AG04450 (cell line): ENCODE measurements at regions of chr16 and their contacts with region 1.

Region 1: GRCh38 chr16:31868691-31869167 is 4.9 kb upstream of the ZNF267 start:
- DNase-seq: peak; percentile 26
- H3K4me3 ChIP-seq: no peak overlapping the region
- H3K27ac ChIP-seq: no peak overlapping the region
- H3K27me3 ChIP-seq: peaks cover 2% of the 10 kb centered on the region
- CTCF ChIP-seq: peak; percentile 77

Region 2: DNA sequence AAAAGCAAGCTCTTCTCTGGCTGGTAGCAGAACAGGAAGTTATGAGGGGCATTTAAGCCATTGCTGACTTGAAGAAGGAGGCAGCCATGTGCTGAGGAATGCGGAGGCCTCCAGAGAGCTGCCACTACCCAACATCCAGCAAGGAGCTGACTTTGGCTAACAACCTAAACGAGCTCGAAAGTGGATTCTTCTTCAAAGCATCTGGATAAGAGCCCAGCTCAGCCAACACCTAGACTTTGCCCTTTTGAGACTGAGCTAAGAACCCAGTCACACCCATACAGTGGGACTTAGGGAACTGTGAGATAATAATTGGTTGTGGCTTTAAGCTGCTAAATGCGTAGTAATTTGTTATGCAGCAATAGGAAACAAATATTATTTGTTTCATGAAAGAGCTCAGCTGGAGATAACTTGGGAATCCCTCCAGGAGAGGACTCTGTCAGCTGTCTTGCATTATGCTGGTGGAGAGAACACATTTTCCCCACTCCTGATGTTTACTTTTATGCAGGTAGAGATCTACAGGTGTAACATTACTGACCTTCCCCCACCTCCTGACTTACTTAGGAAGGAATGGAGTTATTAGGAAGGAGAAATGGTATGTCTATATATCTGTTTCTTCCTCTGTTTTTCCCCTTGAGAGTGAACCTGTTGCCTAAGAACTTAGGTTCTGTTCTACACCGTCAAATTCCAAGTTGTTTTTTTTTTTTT is 1029.1 kb before region 1 on chr16:
- CTCF ChIA-PET with region 1: interaction called, 10 read pairs
- POLR2A ChIA-PET with region 1: no interaction called
- DNase-seq: no peak
- H3K4me3 ChIP-seq: no peak overlapping the region
- H3K27ac ChIP-seq: no peak overlapping the region
- H3K27me3 ChIP-seq: no peaks in the 10 kb centered on the region
- CTCF ChIP-seq: no peak

Region 3: DNA sequence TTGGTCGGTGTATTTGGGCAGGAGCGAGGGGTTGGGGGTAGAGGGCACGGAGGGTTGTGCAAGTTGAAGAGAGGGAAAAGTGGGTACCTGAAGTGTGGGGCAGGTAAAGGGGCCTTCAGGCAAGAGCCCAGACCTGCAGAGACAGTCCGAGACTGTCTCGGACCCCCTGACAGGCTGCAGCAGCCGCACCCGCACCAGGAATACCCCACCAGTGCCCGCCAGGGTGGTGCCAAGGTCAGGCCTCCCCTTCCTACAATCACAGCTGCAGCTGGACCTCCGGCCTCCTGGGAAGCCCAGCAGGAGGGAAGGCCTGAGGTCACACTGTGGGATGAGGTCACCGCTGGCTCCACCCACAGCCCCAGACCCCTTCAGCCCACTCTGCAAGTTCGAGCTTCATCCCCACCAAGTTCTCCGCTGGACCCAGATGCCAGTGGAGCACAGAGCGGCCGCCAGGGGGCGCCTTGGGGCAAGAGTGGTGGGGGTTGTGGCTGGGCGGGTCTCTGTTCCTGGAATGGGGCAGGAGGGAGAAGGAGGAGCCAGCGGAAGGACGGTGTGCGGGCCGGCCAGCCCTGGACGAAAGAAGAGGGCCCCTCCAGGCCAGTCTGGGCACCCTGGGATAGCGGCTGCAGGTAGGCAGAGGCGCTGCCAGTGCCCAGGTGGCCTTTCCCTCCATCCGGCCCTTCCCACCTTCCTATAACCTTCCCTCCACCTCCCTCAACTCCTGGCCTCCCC is 883.9 kb before region 1 on chr16 and contains the start of gene HSD3B7:
- CTCF ChIA-PET with region 1: interaction called, 20 read pairs
- POLR2A ChIA-PET with region 1: no interaction called
- DNase-seq: peak; percentile 44
- H3K4me3 ChIP-seq: peak within 1 kb of the TSS; percentile 53
- H3K27ac ChIP-seq: peak within 1 kb of the TSS; percentile 11
- H3K27me3 ChIP-seq: no peaks in the 10 kb centered on the region
- CTCF ChIP-seq: peak; percentile 90
- polyA plus RNA-seq, gene HSD3B7: 6.1 and 9.5 TPM in 2 replicates

Region 4: GRCh38 chr16:31202414-31203375 is 666.0 kb before region 1 on chr16 and contains the start of gene PYCARD:
- CTCF ChIA-PET with region 1: interaction called, 11 read pairs
- POLR2A ChIA-PET with region 1: interaction called, 4 read pairs
- DNase-seq: no peak
- H3K4me3 ChIP-seq: peak within 1 kb of the TSS; percentile 80
- H3K27ac ChIP-seq: no peak within 1 kb of the TSS
- H3K27me3 ChIP-seq: peaks cover 16% of the 10 kb centered on the region
- CTCF ChIP-seq: no peak
- polyA plus RNA-seq, gene PYCARD: 21.8 and 31.0 TPM in 2 replicates

Region 5: DNA sequence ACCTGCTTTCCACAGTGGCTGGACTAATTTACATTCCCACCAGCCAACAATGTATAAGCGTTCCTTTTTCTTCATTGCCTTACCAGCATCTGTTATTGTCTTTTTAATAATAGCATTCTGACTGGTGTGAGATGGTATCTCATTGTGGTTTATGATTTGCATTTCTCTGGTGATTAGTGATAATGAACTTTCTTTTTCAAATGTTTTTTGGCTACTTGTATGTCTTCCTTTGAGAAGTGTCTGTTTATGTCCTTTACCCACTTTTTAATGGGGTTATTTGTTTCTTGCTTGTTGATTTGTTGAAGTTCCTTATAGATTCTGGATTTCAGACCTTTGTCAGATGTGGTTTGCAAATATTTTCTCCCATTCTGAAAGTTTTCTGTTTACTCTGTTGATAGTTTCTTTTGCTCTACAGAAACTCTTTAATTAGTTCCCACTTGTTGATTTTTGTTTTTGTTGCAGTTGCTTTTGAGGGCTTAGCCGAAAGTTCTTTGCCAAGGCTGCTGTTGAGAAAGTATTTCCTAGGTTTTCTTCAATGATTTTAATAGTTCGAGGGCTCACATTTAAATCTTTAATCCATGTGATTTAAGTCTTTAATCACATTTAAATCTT is 582.2 kb before region 1 on chr16:
- CTCF ChIA-PET with region 1: no interaction called
- POLR2A ChIA-PET with region 1: no interaction called
- DNase-seq: no peak
- H3K4me3 ChIP-seq: no peak overlapping the region
- H3K27ac ChIP-seq: no peak overlapping the region
- H3K27me3 ChIP-seq: no peaks in the 10 kb centered on the region
- CTCF ChIP-seq: no peak

Region 6: DNA sequence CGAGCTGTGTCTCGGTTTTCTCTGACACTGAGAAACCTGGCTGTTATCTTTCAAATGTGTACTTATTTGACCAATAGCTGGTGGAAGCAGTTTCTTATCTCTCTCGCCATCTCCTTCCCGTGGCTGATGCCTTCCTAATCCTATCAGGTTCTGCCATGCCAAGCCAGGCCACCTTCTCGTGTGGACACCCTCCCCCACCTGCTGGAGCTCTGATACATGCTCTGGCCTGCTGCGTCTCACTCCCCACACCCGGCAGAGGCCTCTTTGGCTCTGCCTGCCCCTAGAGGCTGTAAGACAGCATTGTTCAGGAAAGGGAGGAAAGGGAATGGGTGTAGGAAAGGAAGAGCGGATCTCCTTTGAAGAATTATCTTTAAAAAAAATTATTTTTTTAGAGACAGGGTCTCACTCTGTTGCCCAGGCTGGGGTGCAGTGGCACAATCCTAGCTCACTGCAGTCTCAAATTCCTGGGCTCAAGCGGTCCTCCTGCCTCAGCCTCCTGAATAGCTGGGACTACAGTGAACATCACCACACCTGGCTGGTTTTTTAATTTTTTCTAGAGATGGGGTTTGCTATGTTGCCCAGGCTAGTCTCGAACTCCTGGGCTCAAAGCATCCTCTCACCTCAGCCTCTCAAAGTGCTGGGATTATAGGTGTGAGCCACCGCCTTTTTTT is 416.9 kb before region 1 on chr16:
- CTCF ChIA-PET with region 1: interaction called, 10 read pairs
- POLR2A ChIA-PET with region 1: no interaction called
- DNase-seq: peak; percentile 63
- H3K4me3 ChIP-seq: no peak overlapping the region
- H3K27ac ChIP-seq: peak overlapping the region; percentile 96
- H3K27me3 ChIP-seq: no peaks in the 10 kb centered on the region
- CTCF ChIP-seq: peak; percentile 86

Region 7: GRCh38 chr16:31458844-31459721 is 409.6 kb before region 1 on chr16 and contains the start of gene ARMC5:
- CTCF ChIA-PET with region 1: interaction called, 14 read pairs
- POLR2A ChIA-PET with region 1: interaction called, 4 read pairs
- DNase-seq: peak; percentile 97
- H3K4me3 ChIP-seq: peak within 1 kb of the TSS; percentile 87
- H3K27ac ChIP-seq: peak within 1 kb of the TSS; percentile 99
- H3K27me3 ChIP-seq: no peaks in the 10 kb centered on the region
- CTCF ChIP-seq: peak; percentile 68
- polyA plus RNA-seq, gene ARMC5: 2.9 and 4.2 TPM in 2 replicates

Region 8: DNA sequence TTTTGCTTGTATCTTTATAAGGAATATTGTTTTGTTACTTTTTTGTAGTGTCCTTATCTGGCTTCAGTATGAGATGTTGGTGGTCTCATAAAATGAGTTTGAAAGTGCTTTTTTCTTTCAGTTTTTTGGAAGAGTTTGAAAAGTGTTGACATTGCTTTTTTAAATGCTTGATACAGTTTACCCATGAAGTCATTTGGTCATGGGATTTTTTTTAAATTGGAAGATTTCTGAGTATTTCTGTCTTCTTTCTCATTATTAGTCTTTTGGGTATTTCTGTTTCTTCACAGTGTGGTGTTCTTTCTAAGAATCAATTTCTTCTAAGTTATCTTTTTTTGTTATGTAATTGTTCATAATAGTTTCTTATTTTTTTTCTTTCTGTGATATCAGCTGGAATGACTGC is 20.0 kb after region 1 on chr16:
- CTCF ChIA-PET with region 1: interaction called, 12 read pairs
- POLR2A ChIA-PET with region 1: no interaction called
- DNase-seq: no peak
- H3K4me3 ChIP-seq: no peak overlapping the region
- H3K27ac ChIP-seq: no peak overlapping the region
- H3K27me3 ChIP-seq: no peaks in the 10 kb centered on the region
- CTCF ChIP-seq: no peak